K562 (cell line): ENCODE measurements at regions of chr1 and their contacts with region 1.

Region 1: DNA sequence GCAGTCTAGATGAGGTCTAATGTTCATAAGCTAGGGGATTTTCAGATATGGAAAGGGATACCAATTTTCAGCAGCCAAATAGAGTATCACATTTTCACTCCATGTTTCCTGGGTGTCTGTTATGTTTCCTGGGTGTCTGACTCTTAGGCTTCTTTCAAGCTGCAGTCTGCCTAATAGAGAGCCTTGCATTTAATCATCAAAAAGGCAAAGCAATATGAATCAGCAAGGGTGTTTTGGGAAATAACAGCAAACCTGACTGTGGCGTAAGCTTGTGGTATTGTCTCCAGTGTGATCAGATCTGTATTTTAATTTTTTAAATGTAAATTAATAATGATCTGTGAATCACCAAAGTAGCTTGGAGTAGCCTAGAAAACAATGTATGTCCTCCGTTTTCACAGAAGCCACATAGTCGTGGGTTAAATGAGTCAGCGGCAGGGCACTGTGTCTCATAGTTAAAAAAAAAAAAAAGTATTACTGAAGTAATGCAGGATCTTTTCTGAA is 10.4 kb downstream of the LGALS8 start:
- DNase-seq: no peak
- ATAC-seq: no peak
- H3K4me3 ChIP-seq: no peak overlapping the region
- H3K27ac ChIP-seq: no peak overlapping the region
- H3K4me1 ChIP-seq: peaks cover 16 to 22% of the 10 kb centered on the region in 2 experiments; a peak in 4 of 5 replicates
- H3K27me3 ChIP-seq: no peaks in the 10 kb centered on the region
- CTCF ChIP-seq: no peak
- EP300 ChIP-seq: no peak
- POLR2A ChIP-seq: no peak
- RAD21 ChIP-seq: no peak

Region 2: DNA sequence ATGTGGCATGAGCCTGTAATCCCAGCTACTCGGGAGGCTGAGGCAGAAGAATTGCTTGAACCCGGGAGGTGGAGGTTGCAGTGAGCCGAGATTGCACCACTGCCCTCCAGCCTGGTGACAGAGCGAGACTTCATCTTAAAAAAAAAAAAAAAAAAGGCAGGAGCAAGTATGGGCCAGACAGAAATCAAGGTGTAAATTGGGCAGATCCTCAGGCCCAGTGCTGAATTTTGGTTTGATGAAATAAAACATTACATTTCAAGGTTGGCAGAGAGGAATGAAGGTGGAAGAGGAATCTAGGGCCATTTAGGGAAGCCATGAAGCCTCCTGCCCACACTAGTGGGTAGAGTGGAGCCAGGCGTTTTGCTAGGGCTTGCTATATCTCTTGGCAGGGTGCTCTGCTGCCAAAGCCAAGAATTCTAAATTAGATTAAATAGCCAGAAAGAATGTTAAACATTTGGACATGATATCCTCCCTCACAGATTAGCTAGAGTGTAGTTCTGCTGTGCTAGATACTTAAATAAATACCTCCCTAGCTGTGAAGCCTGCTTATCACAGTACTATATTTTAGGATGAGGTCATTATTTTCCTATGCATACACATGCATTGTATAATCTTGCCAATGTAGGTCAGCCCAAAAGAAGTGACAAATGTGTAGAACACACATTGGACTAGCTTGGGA is 27.0 kb before region 1 on chr1:
- CTCF ChIA-PET with region 1: no interaction called
- POLR2A ChIA-PET with region 1: no interaction called
- in situ Hi-C with region 1: no loop called
- intact Hi-C with region 1: no loop called
- DNase-seq: no peak
- ATAC-seq: no peak
- H3K4me3 ChIP-seq: no peak overlapping the region
- H3K27ac ChIP-seq: no peak overlapping the region
- H3K4me1 ChIP-seq: peaks cover 9 to 13% of the 10 kb centered on the region in 2 experiments; a peak in 3 of 5 replicates
- H3K27me3 ChIP-seq: no peaks in the 10 kb centered on the region
- CTCF ChIP-seq: no peak
- EP300 ChIP-seq: no peak
- POLR2A ChIP-seq: no peak
- RAD21 ChIP-seq: no peak

Region 3: DNA sequence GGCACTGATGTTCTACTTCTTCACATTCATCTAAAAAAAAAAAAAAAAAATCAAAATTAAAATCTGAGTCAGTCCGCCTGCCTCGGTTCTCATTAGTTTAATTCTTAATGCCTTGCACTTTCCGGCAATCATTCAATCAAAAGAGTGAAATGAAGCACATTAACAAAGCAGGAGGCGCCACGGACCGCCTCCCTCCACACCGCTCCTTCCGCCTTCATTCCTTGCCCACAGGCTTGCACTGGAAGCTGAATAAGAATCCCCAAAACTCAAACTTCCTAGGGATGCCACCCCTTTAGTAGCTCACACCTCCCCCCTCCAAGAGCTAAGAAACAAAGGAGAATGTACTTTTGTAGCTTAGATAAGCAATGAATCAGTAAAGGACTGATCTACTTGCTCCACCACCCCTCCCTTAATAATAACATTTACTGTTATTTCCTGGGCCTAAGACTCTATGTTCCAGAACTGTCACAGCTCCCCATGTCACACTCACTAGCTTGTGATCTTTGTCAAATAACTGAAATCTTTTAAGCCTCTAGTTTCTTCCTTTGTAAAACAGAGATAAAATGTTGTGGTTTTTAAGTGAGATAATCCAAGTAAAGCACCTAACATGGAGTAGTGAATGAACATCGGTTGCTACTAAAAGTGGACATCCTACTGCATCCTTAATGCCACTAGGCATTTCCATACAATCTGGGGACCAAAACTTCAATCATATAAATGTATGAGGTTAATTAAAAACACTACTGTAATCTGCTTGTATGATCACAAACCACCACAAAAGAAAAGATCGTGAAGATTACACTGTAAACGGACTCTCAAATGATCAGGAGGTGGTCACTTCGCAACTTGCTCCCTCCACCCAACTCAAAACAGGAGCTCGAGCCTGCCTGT is 17.0 kb after region 1 on chr1:
- CTCF ChIA-PET with region 1: no interaction called
- POLR2A ChIA-PET with region 1: interaction called, 11 read pairs
- in situ Hi-C with region 1: no loop called
- intact Hi-C with region 1: no loop called
- DNase-seq: peak in 1 of 4 experiments; percentile 33
- ATAC-seq: peak; percentile 58
- H3K4me3 ChIP-seq: no peak overlapping the region
- H3K27ac ChIP-seq: peak overlapping the region; percentile 41; the same call in 2 of the 3 replicates
- H3K4me1 ChIP-seq: peaks cover 0 to 5% of the 10 kb centered on the region in 2 experiments; a peak in 3 of 5 replicates
- H3K27me3 ChIP-seq: no peaks in the 10 kb centered on the region
- CTCF ChIP-seq: no peak
- EP300 ChIP-seq: peak; percentile 79
- POLR2A ChIP-seq: no peak
- RAD21 ChIP-seq: 0 out of 4 replicates have a peak, but pooled peaks of 1 of the 2 experiments have one; percentile 8